ENCODE measurements at regions of chr11 and their contacts with region 1.

Region 1: DNA sequence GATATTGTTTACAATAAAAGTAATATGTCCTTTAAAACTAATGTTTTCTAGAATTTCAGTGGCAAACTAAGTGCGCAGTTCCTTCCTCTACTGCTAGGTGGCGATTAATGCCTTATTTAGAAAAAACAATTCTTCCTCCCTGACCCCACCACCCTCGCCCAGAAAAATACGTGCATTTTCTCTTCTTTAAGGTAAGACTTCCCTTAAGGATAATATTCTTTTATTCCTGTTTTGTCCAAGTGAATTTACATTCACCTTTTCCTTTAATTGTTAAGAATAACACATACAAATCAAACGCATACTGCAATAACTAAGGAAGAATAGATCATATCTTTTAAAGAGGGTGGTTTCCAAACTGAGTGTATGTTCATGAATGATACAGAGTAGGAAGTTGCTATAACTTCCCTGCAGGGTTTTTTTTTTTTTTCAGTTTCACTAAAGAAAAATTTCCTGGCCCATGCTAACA is 17.0 kb upstream of the PSMA1 start:
- DNase-seq: peak; percentile 66
- H3K4me3 Mint-ChIP-seq: peak overlapping the region; percentile 68
- H3K27ac Mint-ChIP-seq: peak overlapping the region; percentile 90
- H3K4me1 Mint-ChIP-seq: peaks cover 32% of the 10 kb centered on the region
- H3K27me3 Mint-ChIP-seq: no peaks in the 10 kb centered on the region

Region 2: DNA sequence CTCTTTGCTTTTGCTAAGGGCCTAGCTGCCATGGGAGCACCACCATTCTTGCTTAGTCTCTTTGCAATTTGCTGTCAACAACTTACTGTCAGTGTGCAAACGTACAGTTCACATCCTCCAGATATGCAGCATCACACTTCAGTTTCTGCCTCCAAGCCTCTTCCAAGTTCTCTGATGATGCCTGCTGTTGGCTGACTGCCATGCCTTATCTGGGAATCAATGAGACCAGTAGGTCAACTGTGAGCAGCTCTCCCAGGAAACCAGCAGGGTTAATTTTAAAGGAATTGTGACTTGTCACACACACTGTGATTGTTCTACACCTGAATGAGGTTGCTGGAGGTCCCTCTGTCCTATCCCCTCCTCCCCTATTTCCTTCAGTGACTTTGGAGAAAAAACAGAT is 93.5 kb before region 1 on chr11:
- CTCF ChIA-PET with region 1: no interaction called
- intact Hi-C with region 1: no loop called
- DNase-seq: no peak
- H3K4me3 Mint-ChIP-seq: no peak overlapping the region
- H3K27ac Mint-ChIP-seq: no peak overlapping the region
- H3K4me1 Mint-ChIP-seq: peaks cover 46% of the 10 kb centered on the region
- H3K27me3 Mint-ChIP-seq: no peaks in the 10 kb centered on the region

Region 3: DNA sequence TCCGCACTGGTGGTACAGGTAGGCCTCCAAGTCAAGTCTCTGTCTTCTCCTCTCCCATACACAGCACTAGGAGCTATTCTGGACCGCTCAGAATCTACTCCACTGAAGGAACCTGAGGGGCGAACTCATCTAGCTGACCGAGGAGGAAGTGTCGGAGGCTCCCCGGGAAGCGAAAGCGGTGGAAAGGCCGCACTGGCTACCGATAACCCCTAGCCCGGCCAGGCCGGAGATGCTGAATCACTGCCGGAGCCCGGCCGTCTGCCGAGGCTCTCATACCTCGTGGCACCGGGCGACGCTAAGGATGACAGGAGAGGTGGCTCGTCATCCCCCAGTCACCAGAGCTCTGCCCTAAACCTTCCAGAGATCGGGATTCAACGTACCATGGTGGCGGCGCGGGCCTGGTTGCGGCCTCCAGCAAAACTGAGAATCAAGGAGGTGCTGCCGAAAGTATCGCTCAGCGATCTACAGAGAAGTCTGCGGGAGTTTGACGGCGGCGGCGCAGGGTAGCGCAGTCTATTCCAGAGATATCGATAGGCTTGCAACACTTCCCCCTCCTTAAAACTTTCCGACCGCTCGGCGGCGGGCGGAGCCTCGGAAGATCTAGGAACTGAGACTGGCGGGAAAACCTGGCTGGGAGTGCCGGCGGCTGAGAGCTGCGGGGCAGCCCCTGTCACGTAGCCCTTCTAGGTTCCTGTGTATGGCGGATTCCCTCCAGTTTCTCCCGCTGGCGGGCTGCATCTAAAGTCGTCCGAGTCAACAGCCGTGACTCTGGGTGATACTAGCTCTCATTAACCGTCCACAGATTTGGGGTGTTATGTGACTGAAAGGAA is 17.0 kb before region 1 on chr11 and contains the start of gene PSMA1:
- CTCF ChIA-PET with region 1: interaction called, 8 read pairs
- intact Hi-C with region 1: loop called (anchors 1 kb)
- DNase-seq: peak; percentile 98
- H3K4me3 Mint-ChIP-seq: peak within 1 kb of the TSS; percentile 96
- H3K27ac Mint-ChIP-seq: peak within 1 kb of the TSS; percentile 97
- H3K4me1 Mint-ChIP-seq: peaks cover 24% of the 10 kb centered on the region
- H3K27me3 Mint-ChIP-seq: no peaks in the 10 kb centered on the region
- total RNA-seq, gene PSMA1: 367 to 375 TPM

Region 4: DNA sequence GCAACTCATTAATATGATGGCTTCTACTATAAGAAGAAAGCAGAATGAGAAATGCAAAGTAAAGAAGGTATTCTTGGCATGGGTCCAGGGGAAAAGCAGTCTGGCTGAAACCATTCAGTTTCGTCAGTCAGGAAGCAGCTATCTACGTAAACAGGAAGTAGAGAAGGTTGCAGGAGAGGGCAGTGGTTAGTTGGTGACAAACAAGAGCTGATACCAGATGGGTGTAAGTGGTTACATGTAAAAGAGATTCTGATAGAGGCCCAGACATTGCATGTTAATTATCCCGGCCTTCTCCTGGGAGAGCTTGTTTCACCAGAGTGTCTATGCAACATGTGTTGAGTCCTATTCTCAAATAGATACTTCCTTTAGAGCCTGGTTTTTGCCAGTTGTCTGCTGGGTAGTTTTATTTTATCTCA is 41.4 kb after region 1 on chr11:
- CTCF ChIA-PET with region 1: interaction called, 3 read pairs
- intact Hi-C with region 1: loop called (anchors 1 kb)
- DNase-seq: peak; percentile 67
- H3K4me3 Mint-ChIP-seq: peak overlapping the region; percentile 11
- H3K27ac Mint-ChIP-seq: peak overlapping the region; percentile 75
- H3K4me1 Mint-ChIP-seq: peaks cover 47% of the 10 kb centered on the region
- H3K27me3 Mint-ChIP-seq: no peaks in the 10 kb centered on the region

Region 5: GRCh38 chr11:14764579-14765527 is 227.7 kb after region 1 on chr11:
- CTCF ChIA-PET with region 1: interaction called, 6 read pairs
- intact Hi-C with region 1: loop called (anchors 2 kb)
- DNase-seq: peak; percentile 58
- H3K4me3 Mint-ChIP-seq: peak overlapping the region; percentile 41
- H3K27ac Mint-ChIP-seq: no peak overlapping the region
- H3K4me1 Mint-ChIP-seq: peaks cover 45% of the 10 kb centered on the region
- H3K27me3 Mint-ChIP-seq: no peaks in the 10 kb centered on the region

Region 6: DNA sequence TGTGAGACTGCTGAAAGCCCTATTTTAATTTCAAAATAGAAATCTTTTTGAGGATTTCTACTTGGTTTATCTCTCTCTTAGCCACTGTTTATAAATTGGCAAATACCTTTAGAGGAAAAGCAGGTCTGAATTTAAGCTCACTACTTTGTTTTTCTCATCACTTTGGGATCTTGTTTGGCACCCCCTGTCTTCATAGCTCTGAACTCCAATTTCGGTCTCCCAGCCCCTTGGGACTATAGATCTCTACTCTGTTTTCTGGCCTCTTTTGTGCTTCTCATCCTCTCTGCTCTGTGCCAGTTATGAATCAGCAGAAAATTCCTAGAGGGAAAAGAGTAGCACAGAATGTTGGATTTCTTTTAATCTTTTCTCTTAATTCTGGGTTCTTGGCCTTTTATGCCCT is 236.6 kb after region 1 on chr11:
- CTCF ChIA-PET with region 1: interaction called, 3 read pairs
- intact Hi-C with region 1: loop called (anchors 1 kb)
- DNase-seq: peak; percentile 41
- H3K4me3 Mint-ChIP-seq: no peak overlapping the region
- H3K27ac Mint-ChIP-seq: peak overlapping the region; percentile 28
- H3K4me1 Mint-ChIP-seq: peaks cover 55% of the 10 kb centered on the region
- H3K27me3 Mint-ChIP-seq: no peaks in the 10 kb centered on the region

Region 7: DNA sequence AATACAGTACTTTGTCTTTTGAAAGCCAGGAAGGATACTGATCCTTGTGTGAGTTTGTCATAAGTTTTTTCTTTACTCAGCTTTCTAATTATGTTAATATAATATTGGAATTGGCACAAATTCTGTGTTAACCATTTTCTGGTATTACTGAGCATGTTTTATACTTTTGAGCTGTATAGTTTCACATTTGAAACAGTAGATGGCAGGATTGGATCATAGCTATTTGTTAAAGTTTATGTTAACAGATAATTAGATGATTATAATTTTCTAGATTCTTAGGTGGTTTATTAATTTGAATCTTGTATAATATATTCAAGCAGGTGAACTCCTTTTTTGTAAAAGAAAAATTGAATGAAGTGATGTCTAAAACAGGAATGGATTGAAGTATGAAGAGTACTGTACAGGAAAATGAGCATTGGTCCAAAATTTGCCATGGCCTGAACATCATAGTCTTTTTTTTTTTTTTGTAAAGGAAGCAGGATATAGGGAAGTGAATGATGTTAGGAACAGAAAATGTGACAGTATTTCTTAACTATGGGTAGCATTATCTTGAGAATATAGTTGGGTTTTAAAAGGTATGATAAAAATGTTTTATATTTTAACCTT is 252.8 kb after region 1 on chr11:
- CTCF ChIA-PET with region 1: interaction called, 3 read pairs
- intact Hi-C with region 1: loop called (anchors 1 kb)
- DNase-seq: no peak
- H3K4me3 Mint-ChIP-seq: no peak overlapping the region
- H3K27ac Mint-ChIP-seq: no peak overlapping the region
- H3K4me1 Mint-ChIP-seq: peaks cover 6% of the 10 kb centered on the region
- H3K27me3 Mint-ChIP-seq: no peaks in the 10 kb centered on the region

Measured in activated naive CD4-positive, alpha-beta T cell treated with anti-CD3 and anti-CD28 coated beads for 36 hours (primary cell).